Left cardiac atrium (tissue), 4 donors: ENCODE measurements at regions of chr7 and their contacts with region 1.

Region 1: GRCh38 chr7:106425017-106425719 is 140.4 kb upstream of the NAMPT start:
- DNase-seq: peak; percentile 66
- ATAC-seq: peak; percentile 65 to 78

Region 2: GRCh38 chr7:106216517-106216922 is 208.6 kb before region 1 on chr7:
- intact Hi-C with region 1: loop called in 1 of 2 experiments (anchors 5 kb)
- DNase-seq: peak; percentile 70
- ATAC-seq: peak; percentile 84 to 93

Region 3: GRCh38 chr7:106542550-106543220 is 117.5 kb after region 1 on chr7:
- intact Hi-C with region 1: no loop called
- DNase-seq: peak; percentile 65
- ATAC-seq: peak; percentile 92 to 95